SK-N-SH (cell line): ENCODE measurements at regions of chr9 and their contacts with region 1.

Region 1: DNA sequence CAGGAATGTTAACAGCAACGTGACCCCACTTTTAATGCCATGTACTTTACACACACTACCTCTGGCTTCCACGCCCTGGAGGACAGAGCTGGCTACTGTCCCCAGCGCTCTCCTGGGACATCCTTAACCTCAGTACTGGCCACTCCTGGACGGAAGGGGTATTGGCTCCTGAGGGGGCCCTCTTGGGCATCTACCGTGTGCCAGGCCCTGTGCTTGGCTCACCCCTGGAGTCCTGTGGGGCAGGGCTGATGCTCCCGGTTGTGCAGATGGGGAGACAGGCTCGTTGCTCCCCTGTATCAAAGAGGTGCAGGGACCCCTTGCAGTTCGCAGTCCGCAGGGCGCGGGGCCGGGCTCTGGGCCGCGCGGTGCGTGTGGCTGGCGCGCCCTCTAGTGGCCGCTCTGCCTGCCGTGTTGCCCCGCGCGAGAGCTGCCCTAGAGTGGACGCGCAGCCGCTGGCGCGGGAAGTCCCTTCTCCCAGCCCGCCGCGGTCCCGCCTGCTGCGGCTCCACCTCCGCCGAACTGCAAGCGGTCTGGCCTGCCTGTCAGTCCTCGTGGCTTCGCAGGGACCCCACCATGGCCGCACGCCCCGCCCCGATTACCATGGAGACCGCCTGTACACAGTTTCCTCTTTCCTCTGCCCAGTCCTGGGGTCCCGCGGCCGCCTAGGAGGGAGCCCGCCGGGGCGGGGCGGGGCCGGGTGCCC is at the start of gene WDR38:
- DNase-seq: peak; percentile 96
- H3K4me3 ChIP-seq: peak within 1 kb of the TSS; percentile 45 to 62
- H3K27ac ChIP-seq: no peak within 1 kb of the TSS
- H3K4me1 ChIP-seq: peaks cover 0 to 4% of the 10 kb centered on the region in 2 experiments; a peak in 1 of 4 replicates
- H3K27me3 ChIP-seq: no peaks in the 10 kb centered on the region
- CTCF ChIP-seq: peak; percentile 99
- EP300 ChIP-seq: no peak
- RAD21 ChIP-seq: peak; percentile 78
- polyA plus RNA-seq, gene WDR38: not detected in 2 replicates

Region 2: GRCh38 chr9:124743686-124744348 is 109.2 kb before region 1 on chr9:
- CTCF ChIA-PET with region 1: interaction called, 12 read pairs
- POLR2A ChIA-PET with region 1: no interaction called
- DNase-seq: no peak
- H3K4me3 ChIP-seq: no peak overlapping the region
- H3K27ac ChIP-seq: peak overlapping the region; percentile 18 to 65; a peak in 3 of 4 replicates
- H3K4me1 ChIP-seq: peaks cover 8 to 36% of the 10 kb centered on the region in 2 experiments
- H3K27me3 ChIP-seq: no peaks in the 10 kb centered on the region
- CTCF ChIP-seq: no peak
- EP300 ChIP-seq: peak in 1 of 2 experiments; percentile 23; a peak in 1 of 4 replicates
- RAD21 ChIP-seq: no peak

Region 3: DNA sequence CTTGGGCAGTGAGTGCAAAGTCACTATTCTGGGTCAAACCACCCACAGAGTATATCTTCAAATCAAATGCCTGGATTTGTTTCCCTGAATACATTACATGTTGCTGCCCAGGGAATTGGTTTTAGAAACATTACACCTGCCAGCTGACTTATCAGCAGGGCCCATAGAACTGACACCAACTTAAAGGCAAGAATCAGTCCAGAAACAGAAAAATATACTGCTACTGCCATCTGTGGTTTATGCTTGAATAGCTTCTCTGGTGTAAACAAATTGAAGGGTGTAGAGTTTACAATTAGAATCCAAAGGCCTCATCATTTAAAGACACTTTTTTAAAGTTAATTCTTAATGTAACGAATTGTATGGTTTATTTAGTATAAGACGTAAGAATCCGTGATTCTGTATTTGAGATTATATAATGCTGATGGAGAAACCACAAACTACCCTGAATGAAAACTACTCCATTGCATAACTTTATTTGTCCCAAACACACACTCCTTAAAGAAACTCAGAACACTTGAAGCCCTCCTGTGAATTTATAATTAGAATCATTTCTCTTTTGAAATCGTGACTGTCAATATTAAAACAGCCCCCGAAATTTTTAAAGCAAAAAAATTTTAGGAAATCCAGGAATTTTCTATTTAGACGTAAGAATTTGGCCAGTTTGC is 88.1 kb before region 1 on chr9:
- CTCF ChIA-PET with region 1: interaction called, 1,436 read pairs
- POLR2A ChIA-PET with region 1: interaction called, 42 read pairs
- DNase-seq: no peak
- H3K4me3 ChIP-seq: no peak overlapping the region
- H3K27ac ChIP-seq: no peak overlapping the region
- H3K4me1 ChIP-seq: peaks cover 8 to 16% of the 10 kb centered on the region in 2 experiments; a peak in 3 of 4 replicates
- H3K27me3 ChIP-seq: no peaks in the 10 kb centered on the region
- CTCF ChIP-seq: peak; percentile 56
- EP300 ChIP-seq: no peak
- RAD21 ChIP-seq: peak; percentile 65

Region 4: DNA sequence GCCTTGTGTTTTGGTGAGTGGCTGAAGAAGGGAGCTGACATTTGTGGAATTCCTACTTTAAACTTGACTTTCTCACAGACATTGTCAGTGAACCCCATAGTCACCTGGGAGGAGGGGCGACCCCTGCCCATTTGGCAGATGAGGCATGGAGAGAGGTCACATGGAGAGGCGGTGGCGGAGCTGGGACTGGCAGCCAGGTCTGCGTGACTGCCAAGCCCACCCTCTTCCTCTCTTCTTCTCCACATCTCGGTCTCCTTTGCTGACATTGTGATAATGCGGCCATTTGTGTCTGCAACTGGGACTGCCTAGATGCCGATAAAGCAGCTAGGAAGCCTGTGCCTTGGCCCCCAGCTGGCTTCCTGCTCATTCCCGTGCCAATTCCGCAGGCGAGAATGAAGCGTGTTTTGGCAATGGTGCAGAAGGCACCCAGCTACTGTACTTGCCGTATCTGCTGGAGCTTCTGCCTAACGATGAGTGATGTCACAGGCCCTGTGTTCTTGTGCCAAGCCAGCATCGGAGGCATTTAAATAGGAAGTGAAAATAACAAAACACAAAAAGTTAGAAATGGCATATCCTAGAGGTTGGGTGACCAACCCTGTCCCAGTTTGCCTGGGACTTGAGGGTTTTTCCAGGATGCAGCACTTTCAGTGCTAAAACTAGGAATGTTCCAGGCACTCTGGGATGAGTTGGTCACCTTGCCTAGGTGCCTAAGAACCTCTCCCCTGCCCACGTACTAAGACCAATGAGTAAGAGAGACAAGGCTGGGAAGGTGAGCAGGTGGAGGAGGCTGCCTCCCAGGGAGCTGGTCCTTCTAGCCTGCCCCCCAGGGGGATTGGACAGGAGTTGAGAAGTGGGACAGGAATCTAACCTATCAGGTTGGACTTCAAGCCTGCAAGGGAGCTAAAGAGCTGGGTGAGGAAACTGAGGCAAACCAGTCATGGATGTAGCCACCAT is 52.4 kb before region 1 on chr9:
- CTCF ChIA-PET with region 1: interaction called, 215 read pairs
- POLR2A ChIA-PET with region 1: no interaction called
- DNase-seq: no peak
- H3K4me3 ChIP-seq: no peak overlapping the region
- H3K27ac ChIP-seq: no peak overlapping the region
- H3K4me1 ChIP-seq: peaks cover 4 to 15% of the 10 kb centered on the region in 2 experiments; a peak in 3 of 4 replicates
- H3K27me3 ChIP-seq: no peaks in the 10 kb centered on the region
- CTCF ChIP-seq: no peak
- EP300 ChIP-seq: no peak
- RAD21 ChIP-seq: no peak

Region 5: GRCh38 chr9:124818431-124819281 is 34.3 kb before region 1 on chr9:
- CTCF ChIA-PET with region 1: interaction called, 42 read pairs
- POLR2A ChIA-PET with region 1: no interaction called
- DNase-seq: peak; percentile 71
- H3K4me3 ChIP-seq: no peak overlapping the region
- H3K27ac ChIP-seq: peak overlapping the region in 1 of 2 experiments; percentile 8; a peak in 2 of 4 replicates
- H3K4me1 ChIP-seq: peaks cover 0 to 8% of the 10 kb centered on the region in 2 experiments; a peak in 2 of 4 replicates
- H3K27me3 ChIP-seq: no peaks in the 10 kb centered on the region
- CTCF ChIP-seq: no peak
- EP300 ChIP-seq: peak; percentile 35 to 55; a peak in 3 of 4 replicates
- RAD21 ChIP-seq: no peak

Region 6: DNA sequence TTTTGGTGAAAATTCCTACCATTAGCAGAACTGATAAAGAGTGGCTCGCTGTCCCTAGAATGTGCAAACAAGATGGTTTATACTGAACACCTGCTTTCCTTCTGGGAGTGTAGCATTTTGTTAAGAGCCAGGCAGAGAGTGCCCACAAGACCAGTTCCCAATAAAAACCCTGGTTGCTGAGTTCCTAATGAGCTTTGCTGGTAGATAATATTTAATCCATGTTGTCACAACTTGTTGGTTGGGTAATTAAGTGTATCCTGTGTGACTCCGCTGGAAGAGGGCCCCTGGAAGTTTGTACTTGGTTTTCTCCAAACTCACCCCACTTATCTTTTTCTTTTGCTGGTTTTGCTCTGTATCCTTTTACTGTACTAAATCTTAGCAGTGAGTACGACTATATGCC is 127.4 kb after region 1 on chr9:
- CTCF ChIA-PET with region 1: no interaction called
- POLR2A ChIA-PET with region 1: no interaction called
- DNase-seq: no peak
- H3K4me3 ChIP-seq: no peak overlapping the region
- H3K27ac ChIP-seq: no peak overlapping the region
- H3K4me1 ChIP-seq: no peaks in the 10 kb centered on the region
- H3K27me3 ChIP-seq: no peaks in the 10 kb centered on the region
- CTCF ChIP-seq: no peak
- EP300 ChIP-seq: no peak
- RAD21 ChIP-seq: no peak

Region 7: DNA sequence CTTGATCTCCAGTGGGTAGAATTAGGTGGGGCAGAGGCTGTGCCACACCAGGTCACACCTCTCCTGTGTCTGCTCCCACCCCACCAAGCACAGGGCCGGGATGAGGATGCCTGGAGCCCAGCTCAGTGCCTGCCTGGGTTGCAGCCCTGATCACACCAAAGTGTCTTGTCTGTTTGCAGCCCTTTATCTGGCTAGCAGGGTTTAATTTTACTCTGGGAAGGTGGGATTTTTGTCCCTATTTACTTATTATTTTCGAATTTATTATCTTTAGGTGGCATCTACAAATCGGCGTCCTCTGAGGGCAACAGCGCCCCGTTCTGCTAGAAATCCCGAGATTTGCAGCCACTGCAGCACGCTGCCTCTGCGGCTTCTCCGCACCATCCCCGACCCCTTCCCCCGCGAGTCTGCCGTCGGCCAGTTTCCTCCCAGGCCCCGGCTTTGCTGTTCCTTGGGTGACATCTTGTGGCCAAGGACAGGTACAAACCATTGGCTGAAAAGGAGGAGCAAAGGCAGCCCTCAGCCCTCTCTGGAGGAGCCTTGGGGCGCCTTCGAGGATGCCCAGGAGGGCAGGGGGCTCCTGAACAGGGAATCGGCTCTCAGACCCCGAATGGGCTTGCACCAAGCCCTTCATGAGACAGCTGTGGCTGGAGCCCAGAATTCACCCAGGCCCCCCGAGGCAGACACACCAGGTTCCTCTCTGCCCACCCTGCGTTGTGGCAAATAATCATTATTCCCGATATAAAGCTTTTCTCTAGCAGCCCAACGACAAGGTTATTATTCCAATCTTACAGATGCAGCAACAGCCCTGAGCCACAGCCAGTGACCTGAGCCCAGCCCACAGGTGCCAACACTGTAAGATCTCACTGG is 521.7 kb after region 1 on chr9:
- CTCF ChIA-PET with region 1: interaction called, 22 read pairs
- POLR2A ChIA-PET with region 1: no interaction called
- DNase-seq: peak; percentile 89
- H3K4me3 ChIP-seq: peak overlapping the region; percentile 36 to 58
- H3K27ac ChIP-seq: no peak overlapping the region
- H3K4me1 ChIP-seq: peaks cover 0 to 31% of the 10 kb centered on the region in 2 experiments; a peak in 1 of 4 replicates
- H3K27me3 ChIP-seq: no peaks in the 10 kb centered on the region
- CTCF ChIP-seq: peak; percentile 76
- EP300 ChIP-seq: no peak
- RAD21 ChIP-seq: peak; percentile 96